Endothelial cell of umbilical vein (primary cell): ENCODE measurements at regions of chr7 and their contacts with region 1.

Region 1: DNA sequence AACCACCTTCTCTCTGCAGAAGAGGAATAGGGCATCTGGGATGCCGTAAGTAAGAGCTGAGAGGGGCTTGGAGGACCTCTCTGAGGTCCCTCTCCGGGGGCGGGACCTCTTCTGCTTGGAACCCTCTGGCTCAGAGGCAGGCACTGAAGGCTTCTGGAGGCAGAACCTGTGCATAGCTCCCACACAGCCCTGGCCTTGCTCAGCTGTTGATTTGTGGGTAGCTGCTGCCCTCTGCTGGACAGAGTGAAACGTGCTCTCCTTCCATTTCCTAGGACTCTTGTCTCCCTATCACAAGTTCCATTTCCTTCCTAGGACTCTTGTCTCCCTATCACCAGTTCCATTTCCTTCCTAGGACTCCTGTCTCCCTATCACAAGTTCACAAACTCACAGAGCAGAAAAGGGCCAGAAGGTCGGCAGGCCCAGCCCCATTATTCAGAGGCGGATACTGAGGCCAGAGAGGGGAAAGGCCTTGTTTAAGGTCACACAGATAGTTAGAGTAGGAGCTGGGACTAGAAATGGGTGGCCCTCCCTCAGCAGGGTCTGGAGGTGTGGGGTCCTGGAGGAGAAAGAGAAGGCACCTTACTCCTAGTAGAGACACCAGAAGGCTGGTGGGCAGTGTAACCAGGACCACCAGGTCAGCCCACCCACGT is 30.3 kb upstream of the GARS1 start:
- DNase-seq: peak; percentile 89
- H3K4me3 ChIP-seq: no peak overlapping the region
- H3K27ac ChIP-seq: peak overlapping the region; percentile 50
- H3K4me1 ChIP-seq: peaks cover 38% of the 10 kb centered on the region
- H3K27me3 ChIP-seq: no peaks in the 10 kb centered on the region
- CTCF ChIP-seq: peak; percentile 70 to 88
- POLR2A ChIP-seq: no peak

Region 2: GRCh38 chr7:30164567-30164966 is 399.8 kb before region 1 on chr7:
- CTCF ChIA-PET with region 1: interaction called, 17 read pairs
- POLR2A ChIA-PET with region 1: no interaction called
- dilution Hi-C with region 1: no loop called
- intact Hi-C with region 1: loop called (anchors 1 kb)
- DNase-seq: peak; percentile 74
- H3K4me3 ChIP-seq: no peak overlapping the region
- H3K27ac ChIP-seq: no peak overlapping the region
- H3K4me1 ChIP-seq: peaks cover 31% of the 10 kb centered on the region
- H3K27me3 ChIP-seq: peaks cover 0 to under 1% of the 10 kb centered on the region in 2 experiments
- CTCF ChIP-seq: peak; percentile 37
- POLR2A ChIP-seq: no peak

Region 3: DNA sequence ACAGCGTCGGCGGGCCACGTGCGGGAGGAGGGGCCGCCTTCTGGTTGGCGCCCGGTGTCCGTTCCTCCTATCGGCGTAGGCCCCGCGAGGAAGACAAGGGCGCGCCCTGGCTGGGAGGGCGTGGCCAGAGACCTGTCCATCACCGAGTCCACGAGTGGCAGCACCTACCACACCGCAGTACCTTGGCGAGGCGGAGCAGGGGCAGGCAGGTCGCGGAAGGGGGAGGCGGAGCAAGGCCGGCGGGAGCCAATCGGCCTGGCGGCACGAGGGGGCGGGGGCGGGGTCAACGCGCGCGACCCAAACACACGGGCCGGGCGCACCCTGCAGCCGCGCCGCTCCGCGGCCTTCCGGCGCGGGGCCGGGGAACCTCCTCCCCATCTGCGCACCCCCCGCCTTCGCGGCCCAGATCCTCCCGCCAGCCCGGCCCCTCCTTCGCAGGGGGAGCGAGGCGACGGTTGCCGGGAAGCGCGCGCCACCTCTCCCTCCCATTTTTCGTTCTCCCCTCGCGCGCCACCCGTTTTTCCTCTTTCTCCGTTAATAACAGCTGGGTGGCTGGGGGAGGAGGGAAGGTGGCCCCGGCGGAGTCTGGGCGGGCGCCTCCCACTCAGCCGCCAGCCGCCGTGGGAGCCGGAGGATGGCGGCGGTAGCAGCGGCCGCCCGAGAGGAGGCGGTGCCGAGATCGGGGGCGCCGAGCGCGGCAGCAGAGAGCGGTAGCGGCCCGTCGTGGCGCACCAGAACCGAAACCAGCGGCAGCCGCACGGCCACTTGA is 279.9 kb before region 1 on chr7 and contains the start of gene ZNRF2:
- CTCF ChIA-PET with region 1: interaction called, 4 read pairs
- POLR2A ChIA-PET with region 1: no interaction called
- dilution Hi-C with region 1: no loop called
- intact Hi-C with region 1: loop called (anchors 2 kb)
- DNase-seq: peak; percentile 99
- H3K4me3 ChIP-seq: peak within 1 kb of the TSS; percentile 39 to 57 (median 44)
- H3K27ac ChIP-seq: peak within 1 kb of the TSS; percentile 84
- H3K4me1 ChIP-seq: peaks cover 13% of the 10 kb centered on the region
- H3K27me3 ChIP-seq: no peaks in the 10 kb centered on the region
- CTCF ChIP-seq: peak; percentile 14 to 29
- POLR2A ChIP-seq: peak; percentile 19
- total RNA-seq, gene ZNRF2: 5.7 and 5.9 TPM in 2 replicates

Region 4: GRCh38 chr7:30459591-30460257 is 104.6 kb before region 1 on chr7:
- CTCF ChIA-PET with region 1: interaction called, 16 read pairs
- POLR2A ChIA-PET with region 1: no interaction called
- dilution Hi-C with region 1: no loop called
- intact Hi-C with region 1: no loop called
- DNase-seq: peak; percentile 79
- H3K4me3 ChIP-seq: no peak overlapping the region
- H3K27ac ChIP-seq: peak overlapping the region; percentile 56
- H3K4me1 ChIP-seq: peaks cover 18% of the 10 kb centered on the region
- H3K27me3 ChIP-seq: no peaks in the 10 kb centered on the region
- CTCF ChIP-seq: no peak
- POLR2A ChIP-seq: no peak

Region 5: GRCh38 chr7:30478349-30479201 is 85.8 kb before region 1 on chr7 and contains the start of gene NOD1:
- CTCF ChIA-PET with region 1: interaction called, 22 read pairs
- POLR2A ChIA-PET with region 1: no interaction called
- dilution Hi-C with region 1: no loop called
- intact Hi-C with region 1: no loop called
- DNase-seq: peak; percentile 81
- H3K4me3 ChIP-seq: peak within 1 kb of the TSS; percentile 60 to 92 (median 79)
- H3K27ac ChIP-seq: peak within 1 kb of the TSS; percentile 99
- H3K4me1 ChIP-seq: peaks cover 38% of the 10 kb centered on the region
- H3K27me3 ChIP-seq: no peaks in the 10 kb centered on the region
- CTCF ChIP-seq: no peak
- POLR2A ChIP-seq: no peak
- total RNA-seq, gene NOD1: 39.2 and 39.7 TPM in 2 replicates

Region 6: GRCh38 chr7:30510124-30511075 is 54.0 kb before region 1 on chr7:
- CTCF ChIA-PET with region 1: interaction called, 116 read pairs
- POLR2A ChIA-PET with region 1: no interaction called
- dilution Hi-C with region 1: no loop called
- intact Hi-C with region 1: loop called (anchors 1 kb)
- DNase-seq: peak; percentile 64
- H3K4me3 ChIP-seq: no peak overlapping the region
- H3K27ac ChIP-seq: no peak overlapping the region
- H3K4me1 ChIP-seq: no peaks in the 10 kb centered on the region
- H3K27me3 ChIP-seq: no peaks in the 10 kb centered on the region
- CTCF ChIP-seq: peak; percentile 64 to 65
- POLR2A ChIP-seq: no peak